T-cell (primary cell): ENCODE measurements at regions of chr20 and their contacts with region 1.

Region 1: GRCh38 chr20:15220009-15220656 is 882.7 kb upstream of the FLRT3 start:
- DNase-seq: no peak
- ATAC-seq: no peak
- H3K4me3 ChIP-seq: no peak overlapping the region
- H3K4me3 Mint-ChIP-seq: no peak overlapping the region
- H3K27ac ChIP-seq: no peak overlapping the region
- H3K27ac Mint-ChIP-seq: no peak overlapping the region
- H3K4me1 ChIP-seq: no peaks in the 10 kb centered on the region
- H3K4me1 Mint-ChIP-seq: no peaks in the 10 kb centered on the region
- H3K27me3 ChIP-seq: no peaks in the 10 kb centered on the region
- H3K27me3 Mint-ChIP-seq: no peaks in the 10 kb centered on the region

Region 2: GRCh38 chr20:15547119-15547518 is 327.0 kb after region 1 on chr20:
- CTCF ChIA-PET with region 1: no interaction called
- POLR2A ChIA-PET with region 1: interaction called in 1 of 2 experiments, 16 read pairs
- DNase-seq: no peak
- ATAC-seq: no peak
- H3K4me3 ChIP-seq: no peak overlapping the region
- H3K4me3 Mint-ChIP-seq: no peak overlapping the region
- H3K27ac ChIP-seq: no peak overlapping the region
- H3K27ac Mint-ChIP-seq: no peak overlapping the region
- H3K4me1 ChIP-seq: no peaks in the 10 kb centered on the region
- H3K4me1 Mint-ChIP-seq: no peaks in the 10 kb centered on the region
- H3K27me3 ChIP-seq: no peaks in the 10 kb centered on the region
- H3K27me3 Mint-ChIP-seq: no peaks in the 10 kb centered on the region